Motor neuron (in vitro differentiated cells): ENCODE measurements at regions of chr20 and their contacts with region 1.

Region 1: DNA sequence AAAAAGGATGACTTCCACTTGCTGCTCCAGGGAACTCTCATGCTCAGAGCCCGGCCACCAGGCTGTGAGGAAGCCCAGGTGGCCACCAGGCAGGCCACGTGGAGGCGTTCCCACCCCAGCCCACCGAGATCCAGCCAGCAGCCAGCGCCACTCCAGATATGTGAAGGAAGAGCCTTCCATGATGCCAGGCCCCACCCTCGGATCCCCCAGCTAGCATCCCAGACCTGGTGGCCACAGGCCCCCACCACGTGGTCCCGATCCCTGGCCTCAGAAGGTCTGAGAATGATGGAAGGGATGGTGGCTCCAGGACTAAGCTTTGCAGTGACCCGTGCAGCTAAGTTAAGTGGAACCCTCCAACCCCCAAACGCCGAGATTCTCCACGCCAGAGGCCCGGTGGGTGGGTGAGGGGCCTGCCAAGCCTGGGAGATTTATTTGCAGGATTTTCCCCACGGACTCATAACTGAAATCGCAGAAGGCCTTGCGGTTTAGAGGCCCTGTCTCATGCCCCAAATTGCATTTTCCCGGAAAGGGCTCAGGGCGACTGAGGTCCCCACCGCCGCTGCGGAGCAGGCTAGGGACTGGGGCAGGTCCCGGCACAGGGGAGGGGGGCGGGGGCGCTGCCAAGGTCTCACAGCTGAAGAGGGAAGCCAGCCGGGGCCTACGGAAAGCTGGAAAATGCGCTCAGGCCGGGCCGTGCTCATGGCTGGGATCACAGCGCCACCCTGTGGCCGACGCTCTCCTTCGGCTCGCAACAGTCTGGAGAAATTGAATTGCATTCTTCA is 31.1 kb upstream of the CST7 start:
- ATAC-seq: peak; percentile 83 to 100 (median 96)
- H3K4me3 ChIP-seq: no peak overlapping the region
- H3K27ac ChIP-seq: no peak overlapping the region
- H3K4me1 ChIP-seq: peaks cover 0 to 9% of the 10 kb centered on the region in 2 donors

Region 2: DNA sequence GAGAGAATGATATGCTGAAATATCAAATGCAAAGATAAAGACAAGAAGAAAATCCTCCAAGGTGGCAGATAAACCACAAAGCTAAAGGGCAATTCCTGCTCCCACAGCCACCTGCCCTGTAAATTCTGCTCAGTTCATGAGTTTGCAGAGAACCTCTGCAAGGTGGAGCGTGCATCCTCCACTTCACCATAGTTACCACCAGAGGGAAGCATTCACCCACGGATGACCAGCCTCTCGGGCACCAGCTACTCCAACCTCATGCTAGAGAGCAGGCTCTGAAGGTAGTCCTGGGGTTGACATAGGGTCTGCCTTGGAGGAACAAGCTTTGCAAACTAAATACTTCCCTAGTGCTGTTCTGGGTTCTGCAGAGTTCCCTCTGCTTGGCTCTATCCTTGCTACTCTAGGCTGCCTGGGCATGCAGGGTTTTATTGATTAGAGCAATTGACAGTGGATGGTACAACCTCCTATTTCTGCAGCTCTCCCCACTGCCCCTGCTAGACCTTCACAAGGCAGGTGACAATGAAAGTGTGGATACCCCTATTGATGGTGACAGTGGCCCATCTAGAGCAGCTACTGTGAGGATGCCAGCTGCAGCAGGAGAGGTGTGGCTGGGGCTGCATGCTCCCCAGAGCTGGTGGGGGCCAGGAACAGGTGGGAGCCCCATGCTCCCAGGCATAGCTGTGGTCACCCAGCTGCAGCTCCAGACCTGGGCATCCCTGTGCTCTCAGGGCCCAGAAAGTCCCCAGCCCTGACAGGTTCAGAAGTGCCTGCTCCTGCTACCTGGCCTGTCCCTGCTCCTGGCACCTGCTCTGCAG is 980.5 kb before region 1 on chr20:
- in situ Hi-C with region 1: loop called in 4 of 9 experiments (anchors 25 kb)
- ATAC-seq: peak; percentile 95 to 100 (median 100)
- H3K4me3 ChIP-seq: no peak overlapping the region
- H3K27ac ChIP-seq: no peak overlapping the region
- H3K4me1 ChIP-seq: no peaks in the 10 kb centered on the region

Region 3: GRCh38 chr20:24781422-24781980 is 136.5 kb before region 1 on chr20:
- in situ Hi-C with region 1: loop called in 2 of 9 experiments (anchors 10 to 25 kb)
- ATAC-seq: peak in 7 of 8 experiments; percentile 36 to 93 (median 78)
- H3K4me3 ChIP-seq: no peak overlapping the region
- H3K27ac ChIP-seq: no peak overlapping the region
- H3K4me1 ChIP-seq: no peaks in the 10 kb centered on the region